Activated CD4-positive, alpha-beta T cell treated with anti-CD3 and anti-CD28 coated beads for 36 hours (primary cell): ENCODE measurements at regions of chr4 and their contacts with region 1.

Region 1: GRCh38 chr4:158850800-158851644 is 82.2 kb downstream of the FNIP2 start:
- DNase-seq: no peak
- ATAC-seq: no peak
- H3K4me3 Mint-ChIP-seq: no peak overlapping the region
- H3K27ac Mint-ChIP-seq: no peak overlapping the region
- H3K4me1 Mint-ChIP-seq: peaks cover 11% of the 10 kb centered on the region
- H3K27me3 Mint-ChIP-seq: no peaks in the 10 kb centered on the region

Region 2: DNA sequence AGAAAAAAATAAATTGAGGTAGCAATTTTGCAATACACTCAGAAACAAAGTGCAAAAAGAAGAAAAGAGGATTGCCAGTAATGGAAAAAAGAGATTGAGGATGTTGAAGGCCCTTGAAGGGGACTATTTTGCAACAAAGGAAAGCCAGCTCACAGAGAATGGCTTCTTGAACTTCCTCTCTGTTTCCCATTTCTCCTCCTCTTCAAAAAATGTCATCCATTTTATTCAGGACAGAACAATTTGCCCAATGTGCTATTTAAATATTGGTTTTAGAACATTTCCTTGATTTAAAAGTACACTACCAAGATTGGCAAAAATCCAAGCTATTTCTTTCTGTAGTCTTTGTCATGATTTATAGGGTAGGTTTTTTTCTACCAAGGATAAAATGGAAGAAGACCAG is 738.4 kb before region 1 on chr4:
- CTCF ChIA-PET with region 1: no interaction called
- POLR2A ChIA-PET with region 1: no interaction called
- intact Hi-C with region 1: no loop called
- DNase-seq: no peak
- ATAC-seq: no peak
- H3K4me3 Mint-ChIP-seq: no peak overlapping the region
- H3K27ac Mint-ChIP-seq: no peak overlapping the region
- H3K4me1 Mint-ChIP-seq: no peaks in the 10 kb centered on the region
- H3K27me3 Mint-ChIP-seq: peaks cover 4% of the 10 kb centered on the region

Region 3: DNA sequence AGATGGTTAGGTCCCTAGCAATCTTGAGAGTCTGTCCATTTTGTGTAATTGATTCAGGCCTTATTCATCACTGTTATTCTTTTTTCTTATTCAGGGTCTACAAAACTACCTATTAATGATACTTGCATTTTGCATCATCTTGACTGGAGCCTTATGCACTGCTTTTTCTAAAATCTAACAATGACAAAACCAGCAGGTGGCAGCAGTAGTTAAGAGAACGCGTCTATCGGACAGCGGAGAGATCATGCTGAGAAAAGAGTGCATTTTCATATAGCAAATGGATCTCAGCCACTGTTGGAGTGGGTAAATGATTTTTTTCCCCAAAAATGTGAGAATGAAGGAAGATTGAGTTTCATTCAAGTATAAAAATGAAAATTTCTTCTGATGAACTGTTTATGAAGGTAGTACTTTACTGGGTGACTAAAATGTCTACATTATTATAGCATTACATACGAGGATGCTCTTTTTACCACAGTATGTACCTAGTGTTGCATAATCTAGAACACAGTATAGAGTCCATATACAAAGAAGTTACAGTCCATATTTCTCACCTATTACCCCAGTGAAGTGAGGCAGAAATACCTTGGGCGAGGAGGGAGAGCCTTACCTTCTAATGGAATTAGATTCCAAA is 597.6 kb before region 1 on chr4:
- CTCF ChIA-PET with region 1: interaction called, 3 read pairs
- POLR2A ChIA-PET with region 1: no interaction called
- intact Hi-C with region 1: loop called (anchors 2 kb)
- DNase-seq: peak; percentile 65
- ATAC-seq: peak; percentile 73
- H3K4me3 Mint-ChIP-seq: no peak overlapping the region
- H3K27ac Mint-ChIP-seq: no peak overlapping the region
- H3K4me1 Mint-ChIP-seq: no peaks in the 10 kb centered on the region
- H3K27me3 Mint-ChIP-seq: peaks cover 6% of the 10 kb centered on the region

Region 4: GRCh38 chr4:158259955-158260575 is 591.0 kb before region 1 on chr4:
- CTCF ChIA-PET with region 1: no interaction called
- POLR2A ChIA-PET with region 1: no interaction called
- intact Hi-C with region 1: loop called in 1 of 2 experiments (anchors 2 kb)
- DNase-seq: no peak
- ATAC-seq: no peak
- H3K4me3 Mint-ChIP-seq: no peak overlapping the region
- H3K27ac Mint-ChIP-seq: no peak overlapping the region
- H3K4me1 Mint-ChIP-seq: no peaks in the 10 kb centered on the region
- H3K27me3 Mint-ChIP-seq: peaks cover 7% of the 10 kb centered on the region

Region 5: GRCh38 chr4:158560284-158560683 is 290.7 kb before region 1 on chr4:
- CTCF ChIA-PET with region 1: no interaction called
- POLR2A ChIA-PET with region 1: no interaction called
- intact Hi-C with region 1: no loop called
- DNase-seq: no peak
- ATAC-seq: no peak
- H3K4me3 Mint-ChIP-seq: no peak overlapping the region
- H3K27ac Mint-ChIP-seq: no peak overlapping the region
- H3K4me1 Mint-ChIP-seq: no peaks in the 10 kb centered on the region
- H3K27me3 Mint-ChIP-seq: peaks cover 12% of the 10 kb centered on the region

Region 6: DNA sequence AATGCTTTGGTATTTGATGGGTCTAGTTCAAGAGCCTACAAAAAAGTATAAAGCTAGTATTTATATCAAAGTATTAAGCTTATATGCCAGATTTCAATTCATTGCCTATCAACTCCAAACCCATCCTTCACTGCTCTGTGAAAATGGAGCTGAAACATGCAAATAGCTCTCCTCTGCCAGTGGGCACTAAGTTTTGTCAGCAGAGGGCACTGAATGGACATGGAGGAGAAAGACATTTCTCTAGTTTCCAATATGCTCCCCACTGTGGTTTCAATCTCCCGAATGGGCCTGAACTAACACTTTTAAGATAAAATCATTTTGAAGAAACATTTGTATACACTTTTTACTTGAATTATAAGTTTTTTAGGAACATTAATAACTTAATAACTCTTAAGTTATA is 140.2 kb before region 1 on chr4:
- CTCF ChIA-PET with region 1: interaction called, 16 read pairs
- POLR2A ChIA-PET with region 1: no interaction called
- intact Hi-C with region 1: no loop called
- DNase-seq: no peak
- ATAC-seq: no peak
- H3K4me3 Mint-ChIP-seq: no peak overlapping the region
- H3K27ac Mint-ChIP-seq: no peak overlapping the region
- H3K4me1 Mint-ChIP-seq: peaks cover 3% of the 10 kb centered on the region
- H3K27me3 Mint-ChIP-seq: no peaks in the 10 kb centered on the region

Region 7: GRCh38 chr4:158729716-158730559 is 121.1 kb before region 1 on chr4:
- CTCF ChIA-PET with region 1: interaction called, 8 read pairs
- POLR2A ChIA-PET with region 1: no interaction called
- intact Hi-C with region 1: loop called (anchors 1 kb)
- DNase-seq: peak; percentile 72
- ATAC-seq: peak; percentile 87
- H3K4me3 Mint-ChIP-seq: no peak overlapping the region
- H3K27ac Mint-ChIP-seq: no peak overlapping the region
- H3K4me1 Mint-ChIP-seq: peaks cover 25% of the 10 kb centered on the region
- H3K27me3 Mint-ChIP-seq: peaks cover 29% of the 10 kb centered on the region

Region 8: GRCh38 chr4:158768555-158769174 is 82.4 kb before region 1 on chr4 and contains the start of gene FNIP2:
- CTCF ChIA-PET with region 1: interaction called, 6 read pairs
- POLR2A ChIA-PET with region 1: no interaction called
- intact Hi-C with region 1: loop called (anchors 2 kb)
- DNase-seq: peak; percentile 81
- ATAC-seq: peak; percentile 81
- H3K4me3 Mint-ChIP-seq: peak within 1 kb of the TSS; percentile 97
- H3K27ac Mint-ChIP-seq: peak within 1 kb of the TSS; percentile 93
- H3K4me1 Mint-ChIP-seq: peaks cover 41% of the 10 kb centered on the region
- H3K27me3 Mint-ChIP-seq: no peaks in the 10 kb centered on the region
- total RNA-seq, gene FNIP2: 11.6 to 13.0 TPM

Region 9: DNA sequence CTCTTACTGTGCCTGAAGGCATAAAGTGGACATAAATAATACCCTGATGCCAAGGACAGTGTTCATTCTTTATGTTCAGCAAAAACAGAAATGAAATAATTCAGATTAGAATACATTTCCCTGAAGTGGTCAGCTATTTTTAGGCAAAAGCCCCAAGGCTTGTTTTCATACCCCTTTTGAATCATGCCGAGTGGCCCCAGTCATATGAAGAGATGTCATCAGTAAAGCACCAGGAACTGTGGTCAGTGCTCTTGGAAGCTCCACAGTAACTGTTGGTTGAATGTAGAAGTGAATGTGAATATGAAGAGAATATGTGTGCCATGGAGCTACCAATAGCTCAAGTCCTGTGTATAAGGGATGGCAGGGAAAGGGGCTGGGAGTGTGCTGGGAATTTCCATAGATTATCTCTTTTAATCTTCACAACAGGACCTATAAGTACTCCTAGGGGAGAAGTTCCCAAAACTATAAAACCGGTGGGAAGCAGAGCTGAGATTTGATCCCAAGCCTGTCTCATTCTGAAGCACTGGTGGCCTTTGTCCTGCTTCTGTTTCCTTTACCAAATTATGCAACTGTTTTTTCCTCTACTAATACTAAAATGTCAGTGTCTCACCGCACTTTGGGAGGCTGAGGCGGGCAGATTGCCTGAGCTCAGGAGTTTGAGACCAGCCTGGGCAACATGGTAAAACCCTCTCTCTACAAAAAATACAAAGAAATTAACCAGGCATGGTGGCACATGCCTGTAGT is 29.6 kb before region 1 on chr4:
- CTCF ChIA-PET with region 1: interaction called, 3 read pairs
- POLR2A ChIA-PET with region 1: no interaction called
- intact Hi-C with region 1: loop called in 1 of 2 experiments (anchors 2 kb)
- DNase-seq: peak; percentile 43
- ATAC-seq: peak; percentile 47
- H3K4me3 Mint-ChIP-seq: no peak overlapping the region
- H3K27ac Mint-ChIP-seq: peak overlapping the region; percentile 58
- H3K4me1 Mint-ChIP-seq: peaks cover 67% of the 10 kb centered on the region
- H3K27me3 Mint-ChIP-seq: no peaks in the 10 kb centered on the region